ENCODE measurements at regions of chr6 and their contacts with region 1.

Region 1: DNA sequence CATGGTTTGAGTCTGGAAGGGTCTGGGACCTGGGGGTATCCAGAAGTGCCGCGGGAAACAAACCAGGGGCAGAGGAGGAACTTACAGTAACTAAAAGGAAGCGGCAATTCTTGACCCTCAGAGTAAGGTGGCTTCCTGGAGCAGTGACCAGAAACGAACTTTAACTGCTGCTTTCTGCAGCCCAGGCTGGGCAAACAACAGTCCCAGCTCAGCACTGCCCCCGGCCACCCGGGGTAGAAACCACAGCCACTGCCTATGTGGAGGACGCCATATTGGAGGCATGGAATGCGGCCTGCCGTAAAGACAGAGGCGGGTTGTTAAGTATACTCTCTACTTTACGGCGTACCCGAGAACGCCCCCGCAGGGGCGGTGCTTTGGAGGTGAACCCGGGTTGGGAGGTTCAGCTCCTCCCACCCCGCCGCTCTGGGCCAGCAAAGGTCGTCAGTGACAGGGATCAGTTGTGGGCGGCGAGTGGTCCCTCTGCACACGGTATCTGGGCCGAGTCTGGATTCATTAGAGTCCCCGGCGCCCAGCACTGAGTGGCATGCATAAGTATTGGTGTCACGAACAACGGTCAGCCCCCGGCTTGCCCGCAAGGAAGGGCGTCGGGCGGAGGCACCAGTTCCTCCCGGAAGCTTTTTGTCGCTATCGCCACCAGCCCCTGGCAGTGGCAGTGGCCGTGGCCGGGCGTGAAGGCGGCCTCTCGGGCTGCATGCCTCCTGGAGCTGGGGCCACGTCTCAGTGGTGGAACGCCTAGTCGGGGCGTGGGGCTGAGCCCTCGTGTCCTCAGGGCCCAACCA is at the start of gene PDSS2:
- DNase-seq: peak; percentile 100
- ATAC-seq: peak; percentile 96
- H3K4me3 Mint-ChIP-seq: peak within 1 kb of the TSS; percentile 82
- H3K27ac Mint-ChIP-seq: peak within 1 kb of the TSS; percentile 93
- H3K4me1 Mint-ChIP-seq: peaks cover 19% of the 10 kb centered on the region
- H3K27me3 Mint-ChIP-seq: no peaks in the 10 kb centered on the region
- total RNA-seq, gene PDSS2: 11.4 to 11.7 TPM

Region 2: GRCh38 chr6:106629103-106629858 is 830.2 kb before region 1 on chr6 and contains the starts of genes QRSL1 and RTN4IP1:
- CTCF ChIA-PET with region 1: no interaction called
- POLR2A ChIA-PET with region 1: interaction called, 3 read pairs
- intact Hi-C with region 1: loop called in 1 of 2 experiments (anchors 2 kb)
- DNase-seq: peak; percentile 90
- ATAC-seq: peak; percentile 91
- H3K4me3 Mint-ChIP-seq: peak within 1 kb of the TSS; percentile 97
- H3K27ac Mint-ChIP-seq: peak within 1 kb of the TSS; percentile 98
- H3K4me1 Mint-ChIP-seq: peaks cover 28% of the 10 kb centered on the region
- H3K27me3 Mint-ChIP-seq: no peaks in the 10 kb centered on the region
- total RNA-seq, gene QRSL1: 15.8 to 17.9 TPM
- total RNA-seq, gene RTN4IP1: 4.8 to 9.3 TPM

Region 3: GRCh38 chr6:107033126-107033525 is 426.4 kb before region 1 on chr6:
- CTCF ChIA-PET with region 1: no interaction called
- POLR2A ChIA-PET with region 1: no interaction called
- intact Hi-C with region 1: loop called (anchors 1 to 5 kb)
- DNase-seq: no peak
- ATAC-seq: peak; percentile 7
- H3K4me3 Mint-ChIP-seq: no peak overlapping the region
- H3K27ac Mint-ChIP-seq: peak overlapping the region; percentile 28
- H3K4me1 Mint-ChIP-seq: peaks cover 39% of the 10 kb centered on the region
- H3K27me3 Mint-ChIP-seq: no peaks in the 10 kb centered on the region

Region 4: DNA sequence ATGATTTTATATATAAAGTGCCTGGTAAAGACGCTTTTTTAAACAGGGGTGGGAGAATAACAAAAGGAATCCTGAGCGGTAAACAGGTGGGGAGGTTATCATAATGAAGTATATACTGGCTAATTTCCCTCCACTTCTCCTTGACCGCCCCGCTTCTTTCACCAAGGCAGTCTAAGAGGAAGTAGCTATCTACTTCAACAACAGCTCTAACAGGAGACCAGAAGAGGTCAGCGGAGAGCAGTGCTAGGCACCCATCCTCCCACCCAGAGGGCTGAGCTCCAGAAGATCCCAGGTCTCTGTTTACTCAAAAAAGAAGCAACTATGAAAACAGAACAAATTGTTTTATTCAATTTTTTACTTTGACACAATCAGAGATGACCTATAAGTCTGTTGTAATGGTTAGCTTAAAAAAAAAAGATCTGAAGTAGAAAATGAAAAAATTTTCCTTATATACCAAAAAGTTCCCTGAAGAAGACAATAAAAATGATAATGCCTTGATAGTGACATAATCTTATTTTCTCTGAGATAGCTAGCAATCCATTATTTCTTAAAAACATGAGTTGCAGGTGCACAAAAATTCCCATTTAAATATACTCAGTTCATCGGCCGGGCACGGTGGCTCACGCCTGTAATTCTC is 141.3 kb before region 1 on chr6:
- CTCF ChIA-PET with region 1: interaction called, 7 read pairs
- POLR2A ChIA-PET with region 1: no interaction called
- intact Hi-C with region 1: loop called (anchors 1 to 10 kb)
- DNase-seq: peak; percentile 71
- ATAC-seq: peak; percentile 72
- H3K4me3 Mint-ChIP-seq: no peak overlapping the region
- H3K27ac Mint-ChIP-seq: no peak overlapping the region
- H3K4me1 Mint-ChIP-seq: peaks cover 18% of the 10 kb centered on the region
- H3K27me3 Mint-ChIP-seq: no peaks in the 10 kb centered on the region

Region 5: GRCh38 chr6:107419733-107420132 is 39.8 kb before region 1 on chr6:
- CTCF ChIA-PET with region 1: no interaction called
- POLR2A ChIA-PET with region 1: no interaction called
- intact Hi-C with region 1: no loop called
- DNase-seq: no peak
- ATAC-seq: no peak
- H3K4me3 Mint-ChIP-seq: no peak overlapping the region
- H3K27ac Mint-ChIP-seq: no peak overlapping the region
- H3K4me1 Mint-ChIP-seq: peaks cover 10% of the 10 kb centered on the region
- H3K27me3 Mint-ChIP-seq: no peaks in the 10 kb centered on the region

Region 6: GRCh38 chr6:107489636-107490565 is 30.4 kb after region 1 on chr6 and contains the start of gene SOBP:
- CTCF ChIA-PET with region 1: interaction called, 9 read pairs
- POLR2A ChIA-PET with region 1: interaction called, 4 read pairs
- intact Hi-C with region 1: loop called (anchors 1 kb)
- DNase-seq: peak; percentile 55
- ATAC-seq: peak; percentile 61
- H3K4me3 Mint-ChIP-seq: peak within 1 kb of the TSS; percentile 79
- H3K27ac Mint-ChIP-seq: peak within 1 kb of the TSS; percentile 84
- H3K4me1 Mint-ChIP-seq: peaks cover 25% of the 10 kb centered on the region
- H3K27me3 Mint-ChIP-seq: peaks cover 41% of the 10 kb centered on the region
- total RNA-seq, gene SOBP: 0.23 to 0.49 TPM

Region 7: GRCh38 chr6:108260809-108261569 is 801.5 kb after region 1 on chr6 and contains the start of gene SNX3:
- CTCF ChIA-PET with region 1: no interaction called
- POLR2A ChIA-PET with region 1: no interaction called
- intact Hi-C with region 1: loop called in 1 of 2 experiments (anchors 1 kb)
- DNase-seq: peak; percentile 94
- ATAC-seq: peak; percentile 93
- H3K4me3 Mint-ChIP-seq: peak within 1 kb of the TSS; percentile 80
- H3K27ac Mint-ChIP-seq: peak within 1 kb of the TSS; percentile 89
- H3K4me1 Mint-ChIP-seq: peaks cover 23% of the 10 kb centered on the region
- H3K27me3 Mint-ChIP-seq: no peaks in the 10 kb centered on the region
- total RNA-seq, gene SNX3: 77.1 to 112 TPM

Measured in activated CD4-positive, alpha-beta T cell treated with anti-CD3 and anti-CD28 coated beads for 36 hours (primary cell).